H1 (cell line): ENCODE measurements at regions of chr11 and their contacts with region 1.

Region 1: GRCh38 chr11:40924915-40925314 is 534.5 kb downstream of the LRRC4C start:
- DNase-seq: no peak
- H3K4me3 ChIP-seq: no peak overlapping the region
- H3K27ac ChIP-seq: no peak overlapping the region
- H3K4me1 ChIP-seq: no peaks in the 10 kb centered on the region
- H3K27me3 ChIP-seq: no peaks in the 10 kb centered on the region
- CTCF ChIP-seq: peak in 2 of 3 experiments; percentile 19 to 35; a peak in 2 of 4 replicates
- EP300 ChIP-seq: no peak
- POLR2A ChIP-seq: no peak
- RAD21 ChIP-seq: peak; percentile 70

Region 2: GRCh38 chr11:41175304-41175972 is 250.5 kb after region 1 on chr11:
- CTCF ChIA-PET with region 1: interaction called, 12 read pairs
- POLR2A ChIA-PET with region 1: no interaction called
- DNase-seq: no peak
- H3K4me3 ChIP-seq: no peak overlapping the region
- H3K27ac ChIP-seq: no peak overlapping the region
- H3K4me1 ChIP-seq: peaks cover 0 to 7% (median 2%) of the 10 kb centered on the region in 4 experiments; a peak in 3 of 7 replicates
- H3K27me3 ChIP-seq: no peaks in the 10 kb centered on the region
- CTCF ChIP-seq: peak in 2 of 3 experiments; percentile 26 to 40; a peak in 2 of 4 replicates
- EP300 ChIP-seq: no peak
- POLR2A ChIP-seq: no peak
- RAD21 ChIP-seq: peak; percentile 75 to 76

Region 3: GRCh38 chr11:41201156-41201555 is 276.2 kb after region 1 on chr11:
- CTCF ChIA-PET with region 1: interaction called, 10 read pairs
- POLR2A ChIA-PET with region 1: no interaction called
- DNase-seq: peak; percentile 29 to 78
- H3K4me3 ChIP-seq: no peak overlapping the region
- H3K27ac ChIP-seq: no peak overlapping the region
- H3K4me1 ChIP-seq: no peaks in the 10 kb centered on the region
- H3K27me3 ChIP-seq: no peaks in the 10 kb centered on the region
- CTCF ChIP-seq: peak in 2 of 3 experiments; percentile 55 to 72; a peak in 3 of 4 replicates
- EP300 ChIP-seq: no peak
- POLR2A ChIP-seq: no peak
- RAD21 ChIP-seq: peak; percentile 93 to 96

Region 4: GRCh38 chr11:41431784-41432183 is 506.9 kb after region 1 on chr11:
- CTCF ChIA-PET with region 1: interaction called, 11 read pairs
- POLR2A ChIA-PET with region 1: no interaction called
- DNase-seq: no peak
- H3K4me3 ChIP-seq: no peak overlapping the region
- H3K27ac ChIP-seq: no peak overlapping the region
- H3K4me1 ChIP-seq: peaks cover 0 to 3% (median 1%) of the 10 kb centered on the region in 4 experiments; a peak in 2 of 7 replicates
- H3K27me3 ChIP-seq: no peaks in the 10 kb centered on the region
- CTCF ChIP-seq: peak in 2 of 3 experiments; percentile 65 to 72; a peak in 3 of 4 replicates
- EP300 ChIP-seq: no peak
- POLR2A ChIP-seq: no peak
- RAD21 ChIP-seq: peak; percentile 91 to 93

Region 5: GRCh38 chr11:41461057-41461681 is 536.3 kb after region 1 on chr11:
- CTCF ChIA-PET with region 1: no interaction called
- POLR2A ChIA-PET with region 1: no interaction called
- DNase-seq: no peak
- H3K4me3 ChIP-seq: no peak overlapping the region
- H3K27ac ChIP-seq: no peak overlapping the region
- H3K4me1 ChIP-seq: peaks cover 2 to 27% (median 11%) of the 10 kb centered on the region in 4 experiments; a peak in 6 of 7 replicates
- H3K27me3 ChIP-seq: no peaks in the 10 kb centered on the region
- CTCF ChIP-seq: peak in 1 of 3 experiments; percentile 48; a peak in 2 of 4 replicates
- EP300 ChIP-seq: no peak
- POLR2A ChIP-seq: no peak
- RAD21 ChIP-seq: peak; percentile 40 to 49